K562 (cell line): ENCODE measurements at regions of chr1 and their contacts with region 1.

Region 1: DNA sequence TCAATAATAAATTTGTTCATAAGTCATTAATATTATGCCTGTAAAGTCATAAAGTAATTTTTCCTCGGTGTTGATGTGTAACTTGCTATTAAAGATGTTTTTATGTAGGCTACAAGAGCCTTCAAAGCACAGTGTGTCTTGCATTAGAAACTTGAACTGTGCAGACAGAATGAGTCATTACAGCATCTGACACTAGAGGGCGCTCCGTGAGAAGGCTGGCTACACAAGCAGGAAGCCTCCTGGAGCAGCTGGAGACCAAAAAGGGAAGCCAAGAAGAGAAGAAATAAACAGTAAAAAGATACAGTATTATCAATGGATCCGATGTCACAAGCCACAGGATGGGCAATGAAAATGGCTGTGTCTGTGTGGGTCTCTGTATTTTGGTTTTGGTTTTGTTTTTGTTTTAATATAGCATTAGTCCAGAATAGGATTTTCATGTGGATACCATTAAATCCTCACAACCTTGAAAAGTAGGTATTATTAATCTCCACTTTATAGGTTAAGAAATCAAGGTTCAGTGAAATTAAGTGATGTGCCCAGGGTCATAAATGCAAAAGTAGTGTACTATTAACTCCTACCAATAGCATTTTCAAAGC is 16.1 kb upstream of the LRRC8D start:
- DNase-seq: peak; percentile 76 to 91 (median 79)
- ATAC-seq: peak; percentile 95
- H3K4me3 ChIP-seq: no peak overlapping the region
- H3K27ac ChIP-seq: no peak overlapping the region
- H3K4me1 ChIP-seq: peaks cover 4 to 23% of the 10 kb centered on the region in 2 experiments; a peak in 4 of 5 replicates
- H3K27me3 ChIP-seq: no peaks in the 10 kb centered on the region
- CTCF ChIP-seq: peak; percentile 92 to 96 (median 93)
- EP300 ChIP-seq: 0 out of 2 replicates have a peak, but pooled peaks have one; percentile 8
- POLR2A ChIP-seq: no peak
- RAD21 ChIP-seq: peak; percentile 98 to 99

Region 2: GRCh38 chr1:89391686-89392085 is 413.1 kb before region 1 on chr1:
- CTCF ChIA-PET with region 1: no interaction called
- POLR2A ChIA-PET with region 1: no interaction called
- in situ Hi-C with region 1: no loop called
- intact Hi-C with region 1: no loop called
- DNase-seq: no peak
- ATAC-seq: no peak
- H3K4me3 ChIP-seq: no peak overlapping the region
- H3K27ac ChIP-seq: no peak overlapping the region
- H3K4me1 ChIP-seq: no peaks in the 10 kb centered on the region
- H3K27me3 ChIP-seq: no peaks in the 10 kb centered on the region
- CTCF ChIP-seq: no peak
- EP300 ChIP-seq: no peak
- POLR2A ChIP-seq: no peak
- RAD21 ChIP-seq: no peak

Region 3: GRCh38 chr1:89791064-89791726 is 13.5 kb before region 1 on chr1:
- CTCF ChIA-PET with region 1: no interaction called
- POLR2A ChIA-PET with region 1: no interaction called
- in situ Hi-C with region 1: no loop called
- intact Hi-C with region 1: no loop called
- DNase-seq: no peak
- ATAC-seq: no peak
- H3K4me3 ChIP-seq: no peak overlapping the region
- H3K27ac ChIP-seq: no peak overlapping the region
- H3K4me1 ChIP-seq: peaks cover 7 to 8% of the 10 kb centered on the region in 2 experiments; a peak in 3 of 5 replicates
- H3K27me3 ChIP-seq: no peaks in the 10 kb centered on the region
- CTCF ChIP-seq: no peak
- EP300 ChIP-seq: no peak
- POLR2A ChIP-seq: no peak
- RAD21 ChIP-seq: no peak

Region 4: DNA sequence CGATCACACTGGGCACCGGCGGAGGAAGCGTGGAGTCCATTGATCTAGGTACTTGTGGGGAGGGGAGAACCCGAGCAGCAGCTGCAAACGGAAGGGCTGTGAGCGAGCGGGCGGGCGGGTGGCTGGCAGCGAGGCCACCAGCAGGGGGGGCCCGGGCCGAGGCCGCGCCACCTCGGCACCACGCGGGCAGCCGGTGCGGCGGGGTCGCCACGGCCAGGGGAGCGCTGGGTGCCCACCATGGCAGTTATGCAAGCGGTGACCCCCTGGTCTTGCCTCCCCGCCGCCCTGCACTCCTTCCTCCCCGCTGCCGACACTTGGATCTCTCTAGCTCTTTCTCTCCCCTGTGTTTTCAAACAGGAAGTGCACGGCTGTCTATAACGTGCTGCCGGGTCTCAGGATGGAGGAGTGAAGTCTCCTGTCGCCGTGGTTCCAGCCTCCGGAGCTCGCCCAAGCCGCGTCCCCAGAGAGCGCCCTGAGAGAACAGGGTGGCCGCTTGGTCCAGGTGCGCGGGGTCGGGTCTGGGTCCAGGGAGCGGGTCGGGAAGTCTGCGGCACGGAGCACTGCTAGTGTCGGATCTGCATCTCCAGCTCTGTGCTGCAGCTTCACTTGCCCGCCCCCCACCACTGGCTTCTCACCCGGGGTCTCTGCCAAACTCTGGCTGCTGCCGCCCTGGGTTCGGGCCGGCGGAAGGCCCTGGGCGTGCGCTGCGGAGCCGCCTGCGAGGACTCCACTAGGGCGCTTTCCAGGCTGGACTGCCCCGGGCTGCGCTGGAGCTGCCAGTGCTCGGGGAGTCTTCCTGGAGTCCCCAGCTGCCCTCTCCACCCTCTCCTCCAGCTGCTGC is 38.8 kb after region 1 on chr1:
- CTCF ChIA-PET with region 1: no interaction called
- POLR2A ChIA-PET with region 1: no interaction called
- in situ Hi-C with region 1: no loop called
- intact Hi-C with region 1: no loop called
- DNase-seq: no peak
- ATAC-seq: no peak
- H3K4me3 ChIP-seq: no peak overlapping the region
- H3K27ac ChIP-seq: no peak overlapping the region
- H3K4me1 ChIP-seq: peaks cover 8 to 18% of the 10 kb centered on the region in 2 experiments; a peak in 4 of 5 replicates
- H3K27me3 ChIP-seq: no peaks in the 10 kb centered on the region
- CTCF ChIP-seq: no peak
- EP300 ChIP-seq: no peak
- POLR2A ChIP-seq: no peak
- RAD21 ChIP-seq: no peak

Region 5: GRCh38 chr1:89987170-89987819 is 182.6 kb after region 1 on chr1:
- CTCF ChIA-PET with region 1: interaction called, 25 read pairs
- POLR2A ChIA-PET with region 1: interaction called, 3 read pairs
- in situ Hi-C with region 1: loop called (anchors 5 kb)
- intact Hi-C with region 1: loop called (anchors 1 kb)
- DNase-seq: peak; percentile 46 to 82 (median 62)
- ATAC-seq: peak; percentile 91
- H3K4me3 ChIP-seq: no peak overlapping the region
- H3K27ac ChIP-seq: no peak overlapping the region
- H3K4me1 ChIP-seq: peaks cover 2 to 14% of the 10 kb centered on the region in 2 experiments; a peak in 4 of 5 replicates
- H3K27me3 ChIP-seq: no peaks in the 10 kb centered on the region
- CTCF ChIP-seq: peak; percentile 77 to 91 (median 88)
- EP300 ChIP-seq: 0 out of 2 replicates have a peak, but pooled peaks have one; percentile 17
- POLR2A ChIP-seq: no peak
- RAD21 ChIP-seq: peak; percentile 93 to 98